Endothelial cell of umbilical vein (primary cell): ENCODE measurements at regions of chr18 and their contacts with region 1.

Region 1: GRCh38 chr18:21740724-21741510 is at the start of gene MIB1:
- DNase-seq: no peak
- H3K4me3 ChIP-seq: peak within 1 kb of the TSS; percentile 78 to 99 (median 79)
- H3K27ac ChIP-seq: peak within 1 kb of the TSS; percentile 91
- H3K4me1 ChIP-seq: peaks cover 23% of the 10 kb centered on the region
- H3K27me3 ChIP-seq: no peaks in the 10 kb centered on the region
- CTCF ChIP-seq: no peak
- POLR2A ChIP-seq: peak; percentile 42
- total RNA-seq, gene MIB1: 37.5 and 40.6 TPM in 2 replicates

Region 2: GRCh38 chr18:21538230-21538629 is 202.7 kb before region 1 on chr18:
- CTCF ChIA-PET with region 1: no interaction called
- POLR2A ChIA-PET with region 1: no interaction called
- dilution Hi-C with region 1: no loop called
- intact Hi-C with region 1: no loop called
- DNase-seq: no peak
- H3K4me3 ChIP-seq: no peak overlapping the region
- H3K27ac ChIP-seq: no peak overlapping the region
- H3K4me1 ChIP-seq: no peaks in the 10 kb centered on the region
- H3K27me3 ChIP-seq: no peaks in the 10 kb centered on the region
- CTCF ChIP-seq: no peak
- POLR2A ChIP-seq: no peak

Region 3: DNA sequence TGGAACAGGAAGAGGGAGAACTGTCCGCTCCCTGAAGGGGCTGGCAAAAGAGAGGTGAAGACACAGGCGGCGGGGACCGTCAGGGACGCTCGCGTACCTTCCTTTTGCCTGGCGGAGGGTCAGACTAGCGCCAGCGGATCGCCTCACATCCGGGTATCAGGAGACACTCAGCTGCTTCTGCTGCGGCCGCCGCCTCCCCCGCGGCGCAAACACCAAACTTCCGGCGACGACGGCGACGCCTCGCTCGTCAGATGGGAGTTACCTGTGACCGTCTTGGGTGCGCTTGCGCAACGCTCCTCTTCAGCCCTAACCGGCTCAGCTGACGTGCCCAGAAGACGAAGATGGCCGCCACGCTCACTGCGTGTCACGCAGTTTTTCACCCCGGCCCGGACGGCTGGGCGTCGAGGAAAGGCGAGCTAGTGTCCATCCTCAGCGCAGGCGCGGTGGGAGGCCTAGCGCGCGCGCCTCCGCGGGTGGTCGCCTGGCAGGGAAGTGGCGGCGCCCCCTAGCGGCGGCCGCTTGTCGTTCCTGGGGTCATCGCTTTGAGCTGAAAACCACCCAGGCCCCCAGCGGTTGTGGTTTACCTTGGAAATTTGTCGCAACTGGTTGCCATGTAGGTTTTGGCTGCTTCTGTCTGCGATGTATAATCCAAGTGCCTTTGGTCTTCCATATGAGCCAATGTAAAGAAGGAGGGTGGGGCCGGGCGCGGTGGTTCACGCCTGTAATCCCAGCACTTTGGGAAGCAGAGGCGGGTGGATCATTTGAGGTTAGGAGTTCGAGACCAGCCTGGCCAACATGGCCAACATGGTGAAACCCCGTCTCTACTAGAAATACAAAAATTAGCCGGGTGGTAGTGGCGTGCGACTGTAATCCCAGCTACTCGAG is 140.1 kb before region 1 on chr18 and contains the start of gene ESCO1:
- CTCF ChIA-PET with region 1: interaction called, 9 read pairs
- POLR2A ChIA-PET with region 1: interaction called, 5 read pairs
- dilution Hi-C with region 1: no loop called
- intact Hi-C with region 1: loop called (anchors 1 kb)
- DNase-seq: peak; percentile 98
- H3K4me3 ChIP-seq: peak within 1 kb of the TSS; percentile 47 to 89 (median 68)
- H3K27ac ChIP-seq: peak within 1 kb of the TSS; percentile 59
- H3K4me1 ChIP-seq: no peaks in the 10 kb centered on the region
- H3K27me3 ChIP-seq: no peaks in the 10 kb centered on the region
- CTCF ChIP-seq: peak; percentile 97 to 99
- POLR2A ChIP-seq: peak; percentile 83
- total RNA-seq, gene ESCO1: 9.1 and 12.0 TPM in 2 replicates

Region 4: GRCh38 chr18:21612125-21612991 is 128.6 kb before region 1 on chr18 and contains the start of gene SNRPD1:
- CTCF ChIA-PET with region 1: interaction called, 4 read pairs
- POLR2A ChIA-PET with region 1: interaction called, 5 read pairs
- dilution Hi-C with region 1: no loop called
- intact Hi-C with region 1: loop called (anchors 2 kb)
- DNase-seq: peak; percentile 96
- H3K4me3 ChIP-seq: peak within 1 kb of the TSS; percentile 57 to 96 (median 86)
- H3K27ac ChIP-seq: peak within 1 kb of the TSS; percentile 90
- H3K4me1 ChIP-seq: peaks cover 20% of the 10 kb centered on the region
- H3K27me3 ChIP-seq: no peaks in the 10 kb centered on the region
- CTCF ChIP-seq: peak; percentile 97 to 98
- POLR2A ChIP-seq: peak; percentile 94
- total RNA-seq, gene SNRPD1: 91.6 and 97.3 TPM in 2 replicates

Region 5: DNA sequence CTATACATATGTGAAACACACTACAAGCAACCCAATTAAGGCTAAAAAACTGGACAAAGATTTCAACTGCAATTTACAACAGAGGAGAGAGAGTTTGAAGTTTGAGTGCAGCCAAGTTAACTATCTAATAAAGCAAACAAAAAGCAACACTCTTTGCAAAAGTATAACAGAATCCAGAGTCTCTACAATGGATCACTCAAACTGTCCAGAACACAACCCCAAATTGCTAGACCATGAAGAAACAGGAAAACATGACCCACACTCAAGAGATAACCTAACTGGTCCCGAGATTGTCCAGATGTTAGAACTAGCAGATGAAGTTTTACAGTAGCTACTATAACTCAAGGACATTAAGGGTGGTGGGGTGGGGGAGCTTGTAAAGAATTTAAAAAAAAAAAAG is 51.2 kb before region 1 on chr18:
- CTCF ChIA-PET with region 1: no interaction called
- POLR2A ChIA-PET with region 1: no interaction called
- dilution Hi-C with region 1: no loop called
- intact Hi-C with region 1: no loop called
- DNase-seq: no peak
- H3K4me3 ChIP-seq: no peak overlapping the region
- H3K27ac ChIP-seq: no peak overlapping the region
- H3K4me1 ChIP-seq: no peaks in the 10 kb centered on the region
- H3K27me3 ChIP-seq: no peaks in the 10 kb centered on the region
- CTCF ChIP-seq: no peak
- POLR2A ChIP-seq: no peak

Region 6: DNA sequence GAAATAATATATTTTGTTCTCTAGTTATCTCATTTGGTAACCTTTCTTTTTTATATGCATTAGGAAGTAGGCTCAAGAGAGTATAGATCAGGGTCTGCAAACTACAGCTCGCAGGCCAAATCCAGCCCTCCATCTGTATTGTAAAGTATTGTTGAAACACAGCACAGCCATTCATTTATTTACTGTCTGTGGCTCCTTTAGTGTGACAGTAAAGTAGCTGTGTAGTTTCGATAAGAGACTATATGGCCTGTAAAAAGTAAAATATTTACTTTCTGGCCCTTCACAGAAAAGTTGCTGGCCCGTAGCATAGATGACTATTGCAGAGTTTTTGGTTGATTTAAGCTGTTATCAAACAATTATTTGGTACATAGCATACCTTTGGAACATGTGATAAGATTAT is 67.3 kb after region 1 on chr18:
- CTCF ChIA-PET with region 1: no interaction called
- POLR2A ChIA-PET with region 1: no interaction called
- dilution Hi-C with region 1: no loop called
- intact Hi-C with region 1: loop called (anchors 5 kb)
- DNase-seq: no peak
- H3K4me3 ChIP-seq: no peak overlapping the region
- H3K27ac ChIP-seq: no peak overlapping the region
- H3K4me1 ChIP-seq: no peaks in the 10 kb centered on the region
- H3K27me3 ChIP-seq: no peaks in the 10 kb centered on the region
- CTCF ChIP-seq: no peak
- POLR2A ChIP-seq: no peak